ENCODE measurements at regions of chr1 and their contacts with region 1.

Region 1: DNA sequence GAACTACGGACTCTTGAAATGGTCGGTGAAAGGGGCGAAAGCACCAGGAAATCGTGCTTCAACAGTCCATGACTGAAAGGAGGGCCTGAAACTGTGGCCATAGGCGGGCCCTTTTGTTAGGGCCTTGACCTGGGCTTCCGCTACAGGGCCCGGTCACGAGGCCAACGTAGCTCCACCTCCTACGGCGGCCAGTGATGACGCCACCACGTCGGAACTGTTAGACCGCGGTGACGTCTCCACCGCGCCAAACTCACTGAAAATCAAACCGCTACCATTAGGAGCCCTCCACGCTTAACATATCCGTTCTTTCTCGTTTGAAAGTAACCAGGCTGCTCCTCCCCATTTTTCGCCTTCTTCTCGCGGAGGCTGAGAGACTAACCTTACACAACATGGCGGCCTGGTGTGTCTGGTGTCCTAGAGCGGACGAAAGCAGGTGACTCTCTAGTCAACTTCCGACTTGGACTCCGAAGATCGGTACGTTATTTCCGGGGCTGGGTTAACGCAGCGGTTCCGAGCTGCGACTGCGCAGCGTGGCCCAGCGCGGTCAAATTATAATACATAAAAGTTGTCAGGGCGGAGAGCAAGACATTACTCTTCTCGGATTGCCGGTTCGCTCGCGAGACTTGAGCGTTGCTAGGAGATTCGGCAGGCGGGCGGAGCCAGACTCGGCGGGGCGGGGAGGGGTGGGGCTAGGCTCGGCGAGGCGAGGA is 376 bp upstream of the CACYBP start:
- DNase-seq: peak; percentile 99
- ATAC-seq: peak; percentile 82 to 91 (median 88)
- H3K4me3 ChIP-seq: peak overlapping the region; percentile 76 to 84 (median 78)
- H3K27ac ChIP-seq: peak overlapping the region; percentile 99
- H3K4me1 ChIP-seq: peaks cover 0 to 21% (median 3%) of the 10 kb centered on the region in 4 donors
- H3K27me3 ChIP-seq: no peaks in the 10 kb centered on the region
- CTCF ChIP-seq: no peak
- POLR2A ChIP-seq: peak; percentile 97

Region 2: DNA sequence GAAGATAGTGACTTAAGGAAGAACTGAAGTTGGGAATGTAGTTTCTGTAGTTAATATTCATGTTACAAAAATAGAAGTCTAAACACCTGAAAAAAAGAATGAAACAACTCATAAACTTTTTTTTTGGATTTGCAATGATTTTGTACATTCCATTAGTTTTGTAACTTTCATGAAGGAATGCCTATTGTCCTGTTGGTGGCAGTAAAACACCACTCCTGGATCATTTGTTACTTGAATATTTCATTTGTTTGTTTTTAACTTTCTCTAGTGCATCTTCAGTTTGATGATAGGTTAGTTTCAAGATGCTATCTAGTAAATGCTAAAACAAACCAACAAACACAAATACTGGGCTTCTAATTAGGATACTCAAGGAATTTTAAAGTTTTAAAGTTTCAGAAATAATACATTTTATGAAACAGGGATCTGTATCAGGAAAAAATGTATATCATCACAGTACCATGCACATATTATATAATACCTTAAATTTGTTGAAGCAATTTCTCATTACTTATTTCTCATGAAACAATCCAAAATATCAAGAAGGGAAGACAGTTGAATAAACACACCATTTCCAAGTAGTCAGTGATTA is 229.3 kb before region 1 on chr1:
- intact Hi-C with region 1: loop called in 1 of 2 experiments (anchors 5 kb)
- DNase-seq: no peak
- ATAC-seq: peak; percentile 49 to 61 (median 56)
- H3K4me3 ChIP-seq: no peak overlapping the region
- H3K27ac ChIP-seq: no peak overlapping the region
- H3K4me1 ChIP-seq: peaks cover 0 to 22% (median 8%) of the 10 kb centered on the region in 4 donors
- H3K27me3 ChIP-seq: no peaks in the 10 kb centered on the region
- CTCF ChIP-seq: peak; percentile 75 to 82 (median 76)
- POLR2A ChIP-seq: no peak

Measured in right lobe of liver (tissue), 6 donors.